CD4-positive, alpha-beta T cell (primary cell): ENCODE measurements at regions of chr1 and their contacts with region 1.

Region 1: GRCh38 chr1:89524369-89525168 is at the start of gene LRRC8B:
- DNase-seq: peak; percentile 74 to 95 (median 86)
- ATAC-seq: peak; percentile 79
- H3K4me3 ChIP-seq: peak within 1 kb of the TSS; percentile 97
- H3K4me3 Mint-ChIP-seq: no peak within 1 kb of the TSS
- H3K27ac ChIP-seq: peak within 1 kb of the TSS; percentile 90 to 91
- H3K27ac Mint-ChIP-seq: no peak within 1 kb of the TSS
- H3K4me1 ChIP-seq: peaks cover 23% of the 10 kb centered on the region
- H3K4me1 Mint-ChIP-seq: peaks cover 18% of the 10 kb centered on the region
- H3K27me3 ChIP-seq: no peaks in the 10 kb centered on the region
- H3K27me3 Mint-ChIP-seq: no peaks in the 10 kb centered on the region
- CTCF ChIP-seq: no peak
- total RNA-seq, gene LRRC8B: 15.4 to 16.8 TPM

Region 2: GRCh38 chr1:89483010-89483756 is 41.4 kb before region 1 on chr1:
- CTCF ChIA-PET with region 1: no interaction called
- POLR2A ChIA-PET with region 1: no interaction called
- intact Hi-C with region 1: loop called (anchors 5 kb)
- DNase-seq: peak; percentile 57 to 88 (median 72)
- ATAC-seq: peak; percentile 95
- H3K4me3 ChIP-seq: no peak overlapping the region
- H3K4me3 Mint-ChIP-seq: no peak overlapping the region
- H3K27ac ChIP-seq: no peak overlapping the region
- H3K27ac Mint-ChIP-seq: no peak overlapping the region
- H3K4me1 ChIP-seq: no peaks in the 10 kb centered on the region
- H3K4me1 Mint-ChIP-seq: peaks cover 14% of the 10 kb centered on the region
- H3K27me3 ChIP-seq: no peaks in the 10 kb centered on the region
- H3K27me3 Mint-ChIP-seq: no peaks in the 10 kb centered on the region
- CTCF ChIP-seq: peak; percentile 88

Region 3: GRCh38 chr1:89590415-89591080 is 66.0 kb after region 1 on chr1:
- CTCF ChIA-PET with region 1: interaction called, 3 read pairs
- POLR2A ChIA-PET with region 1: interaction called, 6 read pairs
- intact Hi-C with region 1: loop called in 1 of 2 experiments (anchors 5 kb)
- DNase-seq: no peak
- ATAC-seq: no peak
- H3K4me3 ChIP-seq: no peak overlapping the region
- H3K4me3 Mint-ChIP-seq: no peak overlapping the region
- H3K27ac ChIP-seq: no peak overlapping the region
- H3K27ac Mint-ChIP-seq: peak overlapping the region; percentile 50
- H3K4me1 ChIP-seq: peaks cover 8% of the 10 kb centered on the region
- H3K4me1 Mint-ChIP-seq: peaks cover 81% of the 10 kb centered on the region
- H3K27me3 ChIP-seq: no peaks in the 10 kb centered on the region
- H3K27me3 Mint-ChIP-seq: no peaks in the 10 kb centered on the region
- CTCF ChIP-seq: no peak

Region 4: DNA sequence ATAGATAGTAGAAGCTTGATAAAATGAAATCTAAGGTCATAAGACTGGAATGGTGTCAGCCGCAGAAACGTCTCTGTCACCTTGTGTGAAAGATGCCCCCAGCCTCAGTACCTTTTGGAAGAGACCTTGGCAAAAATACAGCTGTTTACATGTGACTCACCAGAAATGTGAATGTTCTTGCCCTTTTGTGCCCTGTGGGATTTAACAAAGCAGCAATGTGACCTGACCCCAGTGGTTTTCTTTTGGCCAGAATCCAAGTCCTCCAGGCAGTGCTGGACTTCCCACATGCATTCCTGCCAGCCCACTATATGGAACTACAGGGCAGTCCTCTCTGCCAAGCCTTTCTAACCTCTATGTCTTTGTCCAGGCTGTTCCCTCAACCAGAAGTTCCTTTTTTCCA is 81.1 kb after region 1 on chr1:
- CTCF ChIA-PET with region 1: no interaction called
- POLR2A ChIA-PET with region 1: interaction called, 93 read pairs
- intact Hi-C with region 1: loop called in 1 of 2 experiments (anchors 2 kb)
- DNase-seq: no peak
- ATAC-seq: no peak
- H3K4me3 ChIP-seq: no peak overlapping the region
- H3K4me3 Mint-ChIP-seq: peak overlapping the region; percentile 56
- H3K27ac ChIP-seq: peak overlapping the region; percentile 80 to 91
- H3K27ac Mint-ChIP-seq: peak overlapping the region; percentile 99
- H3K4me1 ChIP-seq: peaks cover 81% of the 10 kb centered on the region
- H3K4me1 Mint-ChIP-seq: peaks cover 94% of the 10 kb centered on the region
- H3K27me3 ChIP-seq: no peaks in the 10 kb centered on the region
- H3K27me3 Mint-ChIP-seq: no peaks in the 10 kb centered on the region
- CTCF ChIP-seq: no peak

Region 5: GRCh38 chr1:89622895-89623294 is 98.3 kb after region 1 on chr1:
- CTCF ChIA-PET with region 1: interaction called, 4 read pairs
- POLR2A ChIA-PET with region 1: interaction called, 7 read pairs
- intact Hi-C with region 1: loop called in 1 of 2 experiments (anchors 1 kb)
- DNase-seq: peak in 4 of 14 experiments; percentile 25 to 78 (median 69)
- ATAC-seq: peak; percentile 65
- H3K4me3 ChIP-seq: no peak overlapping the region
- H3K4me3 Mint-ChIP-seq: peak overlapping the region; percentile 63
- H3K27ac ChIP-seq: no peak overlapping the region
- H3K27ac Mint-ChIP-seq: peak overlapping the region; percentile 72
- H3K4me1 ChIP-seq: peaks cover 12% of the 10 kb centered on the region
- H3K4me1 Mint-ChIP-seq: peaks cover 62% of the 10 kb centered on the region
- H3K27me3 ChIP-seq: no peaks in the 10 kb centered on the region
- H3K27me3 Mint-ChIP-seq: no peaks in the 10 kb centered on the region
- CTCF ChIP-seq: no peak

Region 6: DNA sequence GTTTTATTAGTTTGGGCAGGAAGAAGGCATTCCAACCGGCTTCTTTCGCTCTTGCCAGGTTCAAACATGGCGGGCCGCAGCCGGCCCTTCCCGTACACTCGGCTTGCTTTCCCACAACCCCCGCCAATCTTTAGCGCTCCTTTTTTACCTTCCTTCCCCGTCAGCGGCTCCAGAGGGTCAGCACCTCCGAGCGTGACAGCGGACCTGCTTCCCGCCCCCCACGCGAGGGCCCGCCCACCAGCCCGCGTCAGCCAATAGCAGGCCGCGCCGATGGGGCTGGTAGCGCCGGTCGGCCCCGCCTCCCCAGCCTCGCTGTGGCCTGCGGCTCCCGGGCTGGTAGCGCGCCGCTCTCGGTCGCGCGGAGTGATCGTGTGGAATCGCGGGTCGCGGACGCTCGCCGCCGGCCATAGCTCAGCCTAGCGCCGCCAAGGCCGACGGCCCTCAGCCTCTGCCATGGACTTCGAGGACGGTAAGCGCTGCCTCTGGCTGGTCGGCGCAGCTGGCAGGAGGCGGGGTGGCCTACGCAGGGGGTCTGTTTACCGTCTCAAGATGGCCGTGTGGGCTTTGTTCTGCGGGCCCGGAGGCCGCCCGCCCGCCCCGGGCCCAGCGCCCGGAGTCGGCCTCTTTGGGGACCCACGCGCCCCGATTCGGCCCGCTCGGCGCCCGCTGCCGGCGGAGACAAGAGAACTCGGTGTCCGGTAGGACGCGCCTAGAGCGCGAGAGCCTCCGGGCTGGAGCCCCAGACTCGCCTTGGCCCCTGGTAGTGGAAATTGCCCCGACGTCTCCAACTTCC is 470.4 kb after region 1 on chr1 and contains the start of gene ZNF326:
- CTCF ChIA-PET with region 1: no interaction called
- POLR2A ChIA-PET with region 1: no interaction called
- intact Hi-C with region 1: loop called in 1 of 2 experiments (anchors 1 kb)
- DNase-seq: peak; percentile 83 to 96 (median 92)
- ATAC-seq: peak; percentile 96
- H3K4me3 ChIP-seq: peak within 1 kb of the TSS; percentile 89
- H3K4me3 Mint-ChIP-seq: peak within 1 kb of the TSS; percentile 98
- H3K27ac ChIP-seq: peak within 1 kb of the TSS; percentile 64 to 70
- H3K27ac Mint-ChIP-seq: peak within 1 kb of the TSS; percentile 95
- H3K4me1 ChIP-seq: peaks cover 17% of the 10 kb centered on the region
- H3K4me1 Mint-ChIP-seq: peaks cover 47% of the 10 kb centered on the region
- H3K27me3 ChIP-seq: no peaks in the 10 kb centered on the region
- H3K27me3 Mint-ChIP-seq: no peaks in the 10 kb centered on the region
- CTCF ChIP-seq: no peak
- total RNA-seq, gene ZNF326: 56.2 to 58.7 TPM